Activated T-helper 1 cell treated with anti-CD3 and anti-CD28 coated beads, Interleukin-12 subunit alpha, Interleukin-12 subunit beta, Interleukin-2, Interleukin-4 antibody, amounts not matched to agents 30 ng/mL and 10 ng/mL and 1 ng/mL, durations not matched to agents 14 hours and 24 hours and 36 hours (primary cell): ENCODE measurements at regions of chr9 and their contacts with region 1.

Region 1: DNA sequence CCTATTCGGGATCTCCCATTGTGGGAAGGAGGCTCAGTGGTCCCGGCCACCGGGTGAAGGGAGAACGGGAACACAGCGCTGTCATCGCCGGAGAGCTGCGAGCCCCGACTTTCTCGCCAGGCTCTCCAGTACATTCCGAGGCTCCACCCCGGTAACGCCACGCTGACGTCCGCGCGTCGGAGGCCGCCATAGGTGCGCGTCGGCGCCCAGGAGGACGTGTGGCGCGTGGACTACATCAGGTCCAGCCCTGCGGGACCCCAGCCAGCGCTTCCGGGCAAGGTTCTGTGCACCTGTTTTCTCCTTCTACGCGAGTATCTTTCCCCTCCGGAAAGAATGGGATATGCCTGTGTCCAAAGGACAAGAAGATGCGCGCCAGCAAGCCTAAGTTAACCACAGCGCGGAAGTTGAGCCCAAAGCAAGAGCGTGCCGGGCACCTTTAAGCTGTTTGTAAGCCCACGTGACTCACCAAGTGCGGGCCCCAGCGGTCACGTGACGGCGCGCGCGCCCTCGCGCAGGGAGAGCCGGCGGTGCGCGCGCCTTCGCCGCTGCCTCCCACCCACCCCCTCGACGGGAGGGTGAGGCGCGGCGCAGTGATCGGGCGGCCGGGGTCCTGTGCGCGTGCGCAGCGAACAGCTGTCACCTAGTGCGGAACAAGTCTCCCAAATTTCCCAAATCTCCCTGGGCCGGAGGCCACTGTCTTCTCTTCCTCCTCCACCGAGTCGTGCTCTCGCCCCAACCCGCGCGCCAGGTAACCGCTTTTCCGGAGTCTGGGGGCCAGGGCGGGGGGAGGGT is at the start of gene KDM4C:
- DNase-seq: peak; percentile 91
- H3K4me3 Mint-ChIP-seq: peak within 1 kb of the TSS; percentile 99
- H3K27ac Mint-ChIP-seq: peak within 1 kb of the TSS; percentile 99
- H3K4me1 Mint-ChIP-seq: peaks cover 12% of the 10 kb centered on the region
- H3K27me3 Mint-ChIP-seq: no peaks in the 10 kb centered on the region
- total RNA-seq, gene KDM4C: 35.9 and 41.4 TPM in 2 replicates

Region 2: GRCh38 chr9:5628530-5629311 is 1128.9 kb before region 1 on chr9 and contains the start of gene RIC1:
- intact Hi-C with region 1: loop called (anchors 5 kb)
- DNase-seq: peak; percentile 90
- H3K4me3 Mint-ChIP-seq: peak within 1 kb of the TSS; percentile 99
- H3K27ac Mint-ChIP-seq: peak within 1 kb of the TSS; percentile 98
- H3K4me1 Mint-ChIP-seq: peaks cover 74% of the 10 kb centered on the region
- H3K27me3 Mint-ChIP-seq: no peaks in the 10 kb centered on the region
- total RNA-seq, gene RIC1: 20.9 and 22.3 TPM in 2 replicates

Region 3: DNA sequence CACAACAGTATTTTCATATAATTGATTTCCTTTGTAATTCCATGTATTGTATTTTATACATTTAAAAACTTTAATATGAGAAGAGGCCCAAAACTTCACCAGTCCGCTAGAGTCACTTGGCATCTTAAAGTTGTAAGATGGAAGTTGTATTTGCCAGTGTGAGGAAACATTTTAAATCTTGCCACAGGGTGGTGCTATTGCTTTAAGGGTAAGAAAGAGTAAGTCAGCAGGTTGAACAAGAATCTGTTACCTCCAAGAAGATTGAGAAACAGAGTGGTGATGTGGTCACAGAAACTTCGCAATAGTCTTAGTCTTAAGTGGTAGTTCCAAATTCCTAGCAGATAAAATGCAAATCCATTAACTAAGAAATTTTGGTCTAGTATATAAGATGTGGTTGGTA is 702.4 kb before region 1 on chr9:
- intact Hi-C with region 1: loop called (anchors 10 kb)
- DNase-seq: peak; percentile 36
- H3K4me3 Mint-ChIP-seq: no peak overlapping the region
- H3K27ac Mint-ChIP-seq: no peak overlapping the region
- H3K4me1 Mint-ChIP-seq: peaks cover under 1% of the 10 kb centered on the region
- H3K27me3 Mint-ChIP-seq: peaks cover 19% of the 10 kb centered on the region

Region 4: DNA sequence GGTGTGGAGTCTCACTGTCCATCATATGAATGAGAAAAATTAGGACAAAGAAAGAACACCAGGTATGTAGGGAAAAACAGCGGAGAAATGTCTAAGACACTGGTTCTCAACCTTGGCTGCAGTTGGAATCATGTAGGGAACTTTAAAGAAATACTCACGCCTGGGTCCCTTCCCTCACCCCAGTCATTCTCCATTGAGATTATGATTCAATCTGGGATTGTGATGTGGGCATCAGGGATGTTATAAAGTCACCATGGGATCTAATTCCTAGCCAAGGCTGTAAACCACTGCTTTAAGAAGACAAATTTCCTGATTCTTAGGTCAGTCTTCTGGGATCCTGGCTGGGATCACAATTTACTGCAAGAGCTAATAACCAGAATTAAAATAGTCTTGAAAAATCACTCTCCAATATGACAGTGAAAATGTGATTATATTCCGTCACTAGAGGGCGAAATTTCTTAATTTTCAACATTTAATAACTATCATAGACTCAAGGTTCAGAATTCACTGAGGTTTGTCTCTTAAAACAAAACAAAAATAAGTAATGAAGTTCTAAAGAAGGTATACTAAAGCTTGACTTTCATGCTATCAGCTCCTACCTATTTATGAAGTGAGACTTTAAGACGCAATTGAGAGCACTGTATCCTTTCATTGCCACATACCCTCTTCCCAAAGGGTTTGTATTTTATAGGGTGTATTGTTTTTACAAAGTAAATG is 172.6 kb before region 1 on chr9:
- intact Hi-C with region 1: loop called (anchors 5 kb)
- DNase-seq: no peak
- H3K4me3 Mint-ChIP-seq: no peak overlapping the region
- H3K27ac Mint-ChIP-seq: no peak overlapping the region
- H3K4me1 Mint-ChIP-seq: no peaks in the 10 kb centered on the region
- H3K27me3 Mint-ChIP-seq: peaks cover 5% of the 10 kb centered on the region

Region 5: DNA sequence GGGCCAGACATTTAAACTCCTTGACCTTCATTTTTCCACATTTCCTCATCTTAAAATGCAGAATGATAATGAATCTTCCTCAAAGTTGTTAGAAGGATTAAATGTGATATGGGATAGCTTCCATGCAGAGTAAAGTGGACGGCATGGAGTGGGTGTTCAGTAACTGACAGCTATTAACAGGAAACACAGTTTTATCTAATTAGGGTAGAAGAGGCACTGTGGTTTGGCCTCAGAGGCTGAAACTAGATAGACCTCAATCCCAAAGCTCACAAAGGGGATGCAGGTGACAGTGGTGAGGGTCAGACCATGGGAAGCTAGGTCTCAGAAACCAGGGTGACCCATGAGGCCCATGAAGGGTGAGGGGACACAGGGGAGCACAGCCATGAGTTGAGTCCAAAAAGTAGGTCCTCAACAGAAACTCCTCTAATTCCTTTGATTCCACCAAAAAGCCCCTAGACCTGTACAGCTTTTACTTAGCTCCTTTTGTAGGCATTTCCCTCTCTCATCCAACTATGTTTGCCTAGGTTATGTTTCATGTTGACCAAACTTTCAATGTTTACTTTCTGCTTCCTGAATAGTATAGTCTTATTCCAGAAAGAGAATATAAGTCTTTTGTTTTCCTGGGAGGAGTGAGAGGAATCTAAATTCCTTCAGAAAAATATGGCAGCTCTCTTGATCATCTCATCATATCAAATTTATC is 84.2 kb before region 1 on chr9:
- intact Hi-C with region 1: no loop called
- DNase-seq: no peak
- H3K4me3 Mint-ChIP-seq: no peak overlapping the region
- H3K27ac Mint-ChIP-seq: no peak overlapping the region
- H3K4me1 Mint-ChIP-seq: no peaks in the 10 kb centered on the region
- H3K27me3 Mint-ChIP-seq: peaks cover 5% of the 10 kb centered on the region

Region 6: DNA sequence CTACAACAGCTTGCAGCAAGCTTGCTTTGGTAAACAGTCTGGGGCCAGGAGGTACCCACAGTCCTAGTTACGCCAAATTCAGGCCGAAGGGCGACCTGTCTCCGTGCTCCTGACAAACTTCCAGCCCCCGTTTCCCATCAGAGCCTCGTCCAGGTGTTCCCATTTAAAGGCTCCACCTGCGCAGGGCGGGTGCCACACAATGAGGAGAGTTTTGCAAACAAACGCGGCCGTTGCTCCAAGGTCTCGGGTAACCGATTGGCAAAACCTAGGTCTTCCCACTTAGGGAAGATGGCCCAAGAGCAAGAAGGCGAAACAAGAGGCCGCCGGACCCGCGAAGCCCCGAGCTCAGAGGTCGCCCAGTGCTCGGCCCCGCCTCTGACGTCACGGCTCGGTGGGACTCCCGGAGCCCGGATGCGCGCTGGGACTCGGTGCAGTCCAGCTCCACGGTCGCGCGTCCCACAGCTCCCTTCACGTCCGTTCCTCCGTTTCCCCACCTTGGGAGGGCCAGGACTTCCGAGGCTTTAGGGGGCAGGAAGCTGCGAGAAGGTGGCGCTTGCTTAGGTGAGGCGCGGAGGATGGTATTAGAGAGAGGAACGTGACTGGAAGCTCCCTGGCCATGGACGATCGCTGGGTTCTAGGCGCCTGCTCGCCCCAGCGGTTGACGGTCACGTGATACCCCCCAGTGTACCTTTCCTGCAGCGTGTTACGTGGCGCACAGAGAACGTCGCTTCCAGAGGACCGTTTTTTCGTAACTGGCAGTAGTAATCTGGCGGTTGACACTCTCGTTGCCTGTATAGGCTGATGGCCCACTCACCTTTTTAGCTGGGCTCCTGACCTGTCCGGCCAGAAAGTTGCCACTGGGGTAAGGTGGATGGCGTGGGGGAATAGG is 41.7 kb before region 1 on chr9:
- intact Hi-C with region 1: loop called (anchors 1 kb)
- DNase-seq: peak; percentile 61
- H3K4me3 Mint-ChIP-seq: peak overlapping the region; percentile 84
- H3K27ac Mint-ChIP-seq: peak overlapping the region; percentile 83
- H3K4me1 Mint-ChIP-seq: peaks cover 7% of the 10 kb centered on the region
- H3K27me3 Mint-ChIP-seq: peaks cover 4% of the 10 kb centered on the region

Region 7: DNA sequence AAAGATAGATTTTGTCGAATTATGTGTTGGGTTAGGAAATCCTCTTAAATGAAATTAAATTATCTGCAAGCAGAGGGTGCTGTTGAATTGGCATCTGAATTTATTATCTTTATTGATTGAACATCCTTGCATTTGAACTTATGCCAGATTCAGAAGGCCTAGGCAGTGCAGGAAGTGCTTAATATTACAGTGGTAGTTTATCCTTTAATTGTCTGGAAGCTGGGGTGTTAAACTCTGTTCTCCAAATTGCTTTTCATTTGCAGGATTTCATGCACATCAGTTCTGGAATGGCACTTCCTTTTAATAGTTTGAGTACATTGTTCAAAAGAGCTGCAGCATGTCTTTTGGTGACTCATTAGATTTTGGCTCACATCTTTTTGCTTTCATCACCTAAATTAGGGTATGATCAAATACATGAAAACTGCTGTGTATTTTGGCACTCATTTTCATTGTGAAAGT is 186.5 kb after region 1 on chr9:
- intact Hi-C with region 1: no loop called
- DNase-seq: no peak
- H3K4me3 Mint-ChIP-seq: no peak overlapping the region
- H3K27ac Mint-ChIP-seq: no peak overlapping the region
- H3K4me1 Mint-ChIP-seq: peaks cover 10% of the 10 kb centered on the region
- H3K27me3 Mint-ChIP-seq: no peaks in the 10 kb centered on the region

Region 8: GRCh38 chr9:7536310-7536939 is 778.8 kb after region 1 on chr9:
- intact Hi-C with region 1: loop called (anchors 2 kb)
- DNase-seq: peak; percentile 31
- H3K4me3 Mint-ChIP-seq: no peak overlapping the region
- H3K27ac Mint-ChIP-seq: no peak overlapping the region
- H3K4me1 Mint-ChIP-seq: peaks cover 45% of the 10 kb centered on the region
- H3K27me3 Mint-ChIP-seq: peaks cover 4% of the 10 kb centered on the region